HEK293 (cell line): ENCODE measurements at regions of chr7 and their contacts with region 1.

Region 1: GRCh38 chr7:33062782-33063443 is 337 bp upstream of the NT5C3A start:
- H3K4me3 ChIP-seq: peak overlapping the region; percentile 86
- H3K27ac ChIP-seq: peak overlapping the region; percentile 89
- H3K4me1 ChIP-seq: no peaks in the 10 kb centered on the region
- CTCF ChIP-seq: no peak

Region 2: DNA sequence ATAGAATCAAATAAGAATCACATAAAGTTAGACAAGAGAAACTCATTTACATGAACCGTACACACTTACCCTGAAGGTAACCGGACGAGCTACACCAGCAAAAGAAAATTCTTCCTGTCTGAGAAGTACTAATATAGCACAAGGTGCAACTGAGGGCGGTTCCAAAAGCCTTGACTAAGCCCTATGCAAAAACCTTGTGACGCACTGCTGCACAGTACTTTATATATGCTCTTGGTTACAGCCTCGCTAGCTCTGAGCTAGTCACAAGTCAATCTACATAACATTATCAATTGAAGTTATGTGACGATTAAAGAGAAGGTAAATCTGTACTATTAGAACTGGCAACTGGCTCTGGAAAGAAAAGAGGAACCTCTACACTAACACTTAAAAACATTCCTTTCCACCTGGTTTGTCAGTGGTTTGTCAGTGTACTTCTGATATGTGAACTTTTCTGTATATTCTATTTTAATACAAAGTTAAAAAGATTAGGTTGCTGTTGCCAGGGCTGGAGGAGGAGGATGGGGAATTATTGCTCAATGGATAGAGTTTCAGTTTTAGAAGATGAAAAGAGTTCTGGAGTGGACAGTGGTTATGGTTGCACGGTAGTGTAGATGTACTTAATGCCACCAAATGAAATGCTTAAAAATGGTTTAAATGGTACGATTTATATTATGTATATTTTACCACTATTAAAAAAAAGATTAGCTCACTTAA is 22.0 kb before region 1 on chr7:
- CTCF ChIA-PET with region 1: interaction called, 3 read pairs
- POLR2A ChIA-PET with region 1: interaction called, 11 read pairs
- H3K4me3 ChIP-seq: peak overlapping the region; percentile 2; the same call in 1 of the 2 replicates
- H3K27ac ChIP-seq: no peak overlapping the region
- H3K4me1 ChIP-seq: peaks cover 47% of the 10 kb centered on the region
- CTCF ChIP-seq: no peak

Region 3: DNA sequence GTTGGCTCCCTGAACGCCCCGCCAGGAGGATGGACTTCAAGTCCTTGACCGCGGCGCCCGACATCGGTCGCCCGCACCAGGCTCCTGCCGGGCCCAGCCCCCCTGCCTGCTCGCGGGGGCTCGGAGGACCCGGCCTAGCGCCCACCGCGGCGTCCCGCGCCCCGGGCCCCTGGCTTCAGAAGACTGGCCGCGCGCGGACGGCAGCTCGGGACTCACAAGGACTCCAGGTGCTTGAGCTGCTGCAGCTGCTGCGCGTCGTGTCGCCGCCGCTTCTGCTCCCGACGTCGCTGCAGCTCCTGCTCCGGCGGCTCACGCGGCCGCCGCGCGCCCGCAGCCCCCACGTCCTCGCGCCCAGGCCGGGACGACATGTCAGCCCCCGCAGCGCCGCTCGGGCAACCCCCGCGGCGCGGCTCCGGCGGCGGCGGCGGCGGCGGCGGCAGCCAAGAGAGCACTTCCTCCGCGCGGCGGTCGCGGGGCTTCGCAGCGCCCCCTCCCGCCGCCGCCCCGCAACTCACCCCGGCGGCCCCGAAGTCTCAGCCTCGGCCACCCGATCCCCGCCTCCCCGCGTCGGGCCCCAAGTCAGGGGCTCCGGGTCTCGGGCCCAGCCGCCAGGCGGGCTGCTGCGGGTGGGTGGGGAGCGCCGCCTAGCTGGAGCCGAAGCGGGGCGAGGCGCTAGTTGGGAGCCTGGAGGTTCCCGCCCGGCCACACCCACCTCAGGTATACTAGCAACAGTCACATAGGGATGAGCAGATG is 46.3 kb after region 1 on chr7 and contains the start of gene RP9:
- CTCF ChIA-PET with region 1: interaction called, 6 read pairs
- POLR2A ChIA-PET with region 1: interaction called, 17 read pairs
- H3K4me3 ChIP-seq: peak within 1 kb of the TSS; percentile 93
- H3K27ac ChIP-seq: peak within 1 kb of the TSS; percentile 91
- H3K4me1 ChIP-seq: peaks cover 10% of the 10 kb centered on the region
- CTCF ChIP-seq: peak; percentile 68